BJ (cell line): ENCODE measurements at regions of chr19 and their contacts with region 1.

Region 1: GRCh38 chr19:13060964-13061927 is 41.4 kb downstream of the LYL1 start:
- DNase-seq: no peak
- H3K4me3 ChIP-seq: no peak overlapping the region
- H3K27me3 ChIP-seq: no peaks in the 10 kb centered on the region
- CTCF ChIP-seq: peak; percentile 98

Region 2: DNA sequence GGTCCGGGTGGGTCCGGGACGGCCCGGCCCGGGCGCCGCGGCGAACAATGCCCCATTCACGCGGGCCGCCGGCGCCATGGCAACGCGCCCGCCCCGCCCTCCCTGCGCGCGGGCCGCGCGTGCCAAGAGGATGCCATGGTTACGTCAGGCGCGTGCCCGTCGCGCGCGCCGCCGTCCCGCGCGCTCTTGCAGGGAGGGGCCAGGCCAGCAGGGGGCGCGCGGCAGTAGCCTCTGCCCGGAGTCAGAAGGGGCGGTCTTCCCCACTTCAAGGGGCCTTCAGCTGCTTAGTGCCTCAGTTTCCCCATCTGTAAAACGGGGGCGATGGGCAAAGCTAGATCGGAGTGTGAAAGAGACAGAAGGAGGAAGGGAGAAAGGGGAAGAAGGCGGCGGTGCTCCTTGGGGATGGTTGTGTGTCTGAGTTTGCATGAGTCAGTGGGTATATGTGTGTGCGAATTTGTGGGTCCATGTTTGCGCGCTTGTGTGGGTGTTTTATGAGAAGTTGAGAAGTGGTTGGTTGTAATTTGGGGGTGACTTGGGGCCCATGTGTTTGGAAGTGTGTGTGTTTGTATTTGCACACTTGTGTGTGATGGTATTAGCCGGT is 77.6 kb before region 1 on chr19:
- CTCF ChIA-PET with region 1: interaction called, 185 read pairs
- POLR2A ChIA-PET with region 1: no interaction called
- DNase-seq: no peak
- H3K4me3 ChIP-seq: peak overlapping the region; percentile 39
- H3K27me3 ChIP-seq: no peaks in the 10 kb centered on the region
- CTCF ChIP-seq: peak; percentile 71

Region 3: DNA sequence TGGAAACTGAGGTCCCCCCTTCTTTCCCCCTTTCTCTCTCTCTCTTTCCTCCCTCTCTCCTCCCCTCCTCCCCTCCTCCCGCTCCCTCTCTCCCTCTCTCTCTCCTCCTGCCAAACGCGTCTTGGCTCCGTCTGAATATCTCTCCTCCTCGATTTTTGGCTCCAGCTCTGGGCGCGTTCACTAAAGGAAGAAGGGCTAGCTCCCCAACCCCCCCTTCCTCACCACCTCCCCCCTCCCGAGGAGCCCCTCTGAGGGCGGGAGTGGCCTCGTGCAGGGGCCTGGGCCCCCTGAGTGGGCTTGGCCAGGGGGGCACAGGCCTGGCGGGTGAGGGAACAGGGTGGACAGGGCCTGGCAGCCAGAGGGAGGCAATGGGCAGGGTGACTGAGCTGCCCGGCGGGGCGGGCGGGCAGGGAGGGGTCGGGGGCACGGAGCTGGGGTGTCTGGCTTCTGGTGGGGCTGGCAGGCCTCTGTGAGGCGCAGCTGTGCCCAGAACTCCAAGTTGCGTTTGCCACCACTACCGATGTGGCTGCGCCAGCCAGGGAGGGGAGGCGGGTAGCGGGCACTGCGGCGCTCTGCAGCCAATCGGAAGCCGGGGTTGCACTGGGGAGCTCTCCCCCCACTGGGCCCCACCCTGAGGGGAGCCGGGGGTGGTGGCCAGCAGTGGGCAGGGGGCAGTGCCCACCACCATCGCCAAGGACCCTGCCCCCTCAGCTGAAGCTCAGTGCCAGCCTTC is 58.9 kb before region 1 on chr19:
- CTCF ChIA-PET with region 1: interaction called, 23 read pairs
- POLR2A ChIA-PET with region 1: interaction called, 3 read pairs
- DNase-seq: no peak
- H3K4me3 ChIP-seq: peak overlapping the region; percentile 23; the same call in 1 of the 2 replicates
- H3K27me3 ChIP-seq: no peaks in the 10 kb centered on the region
- CTCF ChIP-seq: 0 out of 2 replicates have a peak, but pooled peaks have one; percentile 4

Region 4: GRCh38 chr19:13033819-13034611 is 27.2 kb before region 1 on chr19:
- CTCF ChIA-PET with region 1: interaction called, 358 read pairs
- POLR2A ChIA-PET with region 1: no interaction called
- DNase-seq: no peak
- H3K4me3 ChIP-seq: no peak overlapping the region
- H3K27me3 ChIP-seq: no peaks in the 10 kb centered on the region
- CTCF ChIP-seq: peak; percentile 84

Region 5: DNA sequence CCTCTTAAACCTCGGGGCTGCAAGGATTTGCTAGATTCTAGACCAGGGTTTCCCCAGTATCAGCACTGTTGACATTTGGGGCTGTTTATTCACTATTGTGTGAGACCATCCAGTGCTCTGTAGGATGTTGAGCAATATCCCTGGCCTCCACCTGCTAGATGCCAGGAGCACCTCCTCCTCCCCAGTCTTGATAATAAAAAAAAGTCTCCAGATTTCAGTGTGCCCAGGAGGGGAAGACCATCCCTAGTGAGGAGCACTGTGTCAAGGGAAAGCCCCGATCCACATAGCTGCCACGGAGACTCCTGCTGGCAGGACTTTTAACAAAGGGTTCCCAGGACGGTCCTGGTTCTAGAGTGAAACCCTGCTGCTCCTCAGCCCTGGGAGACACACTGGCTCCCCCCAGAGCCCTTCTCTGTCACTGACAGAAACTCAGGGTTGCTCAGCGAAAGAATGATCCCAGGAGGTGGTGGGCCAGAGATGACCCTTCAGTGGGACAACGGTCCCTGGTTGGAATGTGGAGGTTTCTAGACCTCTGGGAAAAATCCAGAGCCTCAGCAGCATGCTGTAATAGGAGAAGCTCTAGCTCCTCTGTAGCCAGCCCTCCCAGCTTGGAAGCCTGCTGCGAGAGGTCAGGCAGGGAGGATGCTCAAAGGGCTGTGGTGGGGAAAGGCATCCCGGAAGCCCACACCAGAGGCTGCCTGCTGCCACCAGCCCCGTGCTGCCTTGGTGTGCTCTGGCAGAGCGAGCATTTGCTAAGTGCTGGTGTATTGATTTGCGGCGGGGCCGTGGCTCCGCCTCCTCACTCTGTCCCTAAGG is 21.2 kb after region 1 on chr19:
- CTCF ChIA-PET with region 1: interaction called, 37 read pairs
- POLR2A ChIA-PET with region 1: interaction called, 3 read pairs
- DNase-seq: no peak
- H3K4me3 ChIP-seq: no peak overlapping the region
- H3K27me3 ChIP-seq: no peaks in the 10 kb centered on the region
- CTCF ChIP-seq: peak; percentile 56

Region 6: GRCh38 chr19:13220847-13221246 is 159.6 kb after region 1 on chr19:
- CTCF ChIA-PET with region 1: no interaction called
- POLR2A ChIA-PET with region 1: no interaction called
- DNase-seq: no peak
- H3K4me3 ChIP-seq: no peak overlapping the region
- H3K27me3 ChIP-seq: peaks cover 4% of the 10 kb centered on the region; the same call in 1 of the 2 replicates
- CTCF ChIP-seq: no peak

Region 7: DNA sequence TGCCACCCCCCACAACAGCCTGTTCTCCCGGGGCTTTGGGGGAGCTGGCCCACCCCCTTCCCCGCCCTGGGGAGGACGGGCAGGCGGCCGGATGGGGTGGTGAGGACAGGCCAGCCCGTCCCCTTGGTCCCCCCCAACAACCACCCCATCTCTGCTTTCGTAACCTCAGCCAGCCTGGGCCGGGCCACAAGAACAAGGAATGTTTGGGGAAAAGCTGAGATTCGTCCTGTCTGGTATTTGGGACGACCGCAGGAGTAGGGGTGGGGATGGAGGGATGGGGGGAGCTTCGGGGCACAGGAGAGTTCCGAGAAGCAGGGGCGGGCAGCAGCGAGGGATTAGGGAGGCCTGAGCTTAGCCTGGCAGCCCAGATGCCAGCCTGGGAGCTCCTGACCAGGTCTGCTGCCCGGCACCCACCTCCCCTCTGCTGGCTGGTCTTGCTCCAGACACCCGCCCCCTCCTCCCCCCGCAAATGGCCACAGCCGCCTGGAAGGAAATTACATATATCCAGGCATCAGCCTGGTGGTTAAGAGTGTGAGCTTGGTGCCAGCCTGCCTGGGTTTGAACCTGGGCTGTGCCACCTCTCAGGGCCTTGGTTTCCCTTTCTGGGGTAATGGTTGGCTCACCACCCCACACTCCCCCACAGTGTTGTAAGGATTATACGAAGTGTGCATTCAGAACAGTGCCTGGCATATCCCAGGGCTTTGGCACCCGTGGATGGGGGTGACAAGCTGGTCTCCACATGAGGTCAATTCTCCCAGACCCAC is 877.2 kb after region 1 on chr19 and contains the start of gene PODNL1:
- CTCF ChIA-PET with region 1: no interaction called
- POLR2A ChIA-PET with region 1: no interaction called
- DNase-seq: peak; percentile 48
- H3K4me3 ChIP-seq: peak within 1 kb of the TSS; percentile 64
- H3K27me3 ChIP-seq: no peaks in the 10 kb centered on the region
- CTCF ChIP-seq: no peak
- polyA plus RNA-seq, gene PODNL1: 12.5 and 18.6 TPM in 2 replicates